ENCODE measurements at regions of chr5 and their contacts with region 1.

Region 1: DNA sequence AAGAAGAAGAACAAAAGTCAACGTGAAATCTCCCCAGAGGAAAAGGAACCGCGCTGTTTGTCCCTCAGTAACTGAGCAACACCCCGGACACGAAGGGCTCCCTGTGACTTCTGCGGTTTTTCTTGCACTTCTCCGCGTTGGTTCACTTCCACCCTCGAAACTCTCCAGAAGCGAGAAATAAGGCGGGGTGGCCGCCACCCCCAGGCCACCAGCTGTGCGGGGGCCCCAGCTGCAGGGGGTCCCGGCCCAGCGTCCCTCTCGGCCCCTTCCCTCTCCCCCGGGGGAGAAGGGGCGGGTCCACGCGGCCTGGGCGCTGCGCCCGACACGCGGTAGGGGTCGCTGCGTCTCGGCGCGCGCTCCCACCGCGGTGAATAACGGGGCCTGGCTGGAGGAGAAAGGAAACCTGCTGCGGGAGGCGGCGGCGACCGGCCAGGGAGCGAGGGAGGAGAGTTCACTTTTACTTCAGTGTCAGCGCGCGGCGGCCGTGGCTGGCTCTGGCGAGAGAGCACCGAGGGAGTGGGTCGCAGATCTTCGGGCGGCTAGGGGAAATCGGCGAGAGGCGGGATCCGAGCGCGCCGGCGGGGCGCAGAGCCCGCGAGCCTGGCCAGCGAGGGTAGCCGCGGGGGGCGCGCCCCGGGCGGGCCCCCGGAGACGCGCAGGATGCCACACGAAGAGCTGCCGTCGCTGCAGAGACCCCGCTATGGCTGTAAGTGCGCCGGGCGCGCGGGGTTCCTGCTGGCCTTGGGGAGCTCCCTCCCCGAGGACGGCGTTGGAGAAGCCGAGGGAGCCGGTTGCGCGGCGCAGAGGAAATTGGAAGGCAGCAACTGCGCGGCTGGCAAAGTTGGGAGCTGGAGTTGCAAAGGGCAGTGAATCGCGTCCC is at the start of gene IQGAP2:
- DNase-seq: peak; percentile 91 to 96 (median 94)
- H3K4me3 ChIP-seq: peak within 1 kb of the TSS; percentile 68 to 82
- H3K4me3 Mint-ChIP-seq: peak within 1 kb of the TSS; percentile 95 to 98 (median 97)
- H3K27ac ChIP-seq: peak within 1 kb of the TSS; percentile 93
- H3K27ac Mint-ChIP-seq: peak within 1 kb of the TSS; percentile 96 to 99 (median 98)
- H3K4me1 ChIP-seq: peaks cover 56% of the 10 kb centered on the region
- H3K4me1 Mint-ChIP-seq: peaks cover 45 to 72% (median 54%) of the 10 kb centered on the region in 4 donors
- H3K27me3 ChIP-seq: no peaks in the 10 kb centered on the region
- H3K27me3 Mint-ChIP-seq: no peaks in the 10 kb centered on the region
- total RNA-seq, gene IQGAP2: 125 to 126 TPM

Region 2: GRCh38 chr5:76199336-76200318 is 203.5 kb before region 1 on chr5:
- CTCF ChIA-PET with region 1: no interaction called
- POLR2A ChIA-PET with region 1: no interaction called
- intact Hi-C with region 1: no loop called
- DNase-seq: no peak
- H3K4me3 ChIP-seq: no peak overlapping the region
- H3K4me3 Mint-ChIP-seq: peak overlapping the region in 1 of 8 donors; percentile 66
- H3K27ac ChIP-seq: no peak overlapping the region
- H3K27ac Mint-ChIP-seq: peak overlapping the region in 1 of 7 donors; percentile 12
- H3K4me1 ChIP-seq: peaks cover 9% of the 10 kb centered on the region
- H3K4me1 Mint-ChIP-seq: peaks cover 0 to 9% (median 5%) of the 10 kb centered on the region in 4 donors
- H3K27me3 ChIP-seq: no peaks in the 10 kb centered on the region
- H3K27me3 Mint-ChIP-seq: peaks cover 0 to 9% of the 10 kb centered on the region in 2 donors

Region 3: DNA sequence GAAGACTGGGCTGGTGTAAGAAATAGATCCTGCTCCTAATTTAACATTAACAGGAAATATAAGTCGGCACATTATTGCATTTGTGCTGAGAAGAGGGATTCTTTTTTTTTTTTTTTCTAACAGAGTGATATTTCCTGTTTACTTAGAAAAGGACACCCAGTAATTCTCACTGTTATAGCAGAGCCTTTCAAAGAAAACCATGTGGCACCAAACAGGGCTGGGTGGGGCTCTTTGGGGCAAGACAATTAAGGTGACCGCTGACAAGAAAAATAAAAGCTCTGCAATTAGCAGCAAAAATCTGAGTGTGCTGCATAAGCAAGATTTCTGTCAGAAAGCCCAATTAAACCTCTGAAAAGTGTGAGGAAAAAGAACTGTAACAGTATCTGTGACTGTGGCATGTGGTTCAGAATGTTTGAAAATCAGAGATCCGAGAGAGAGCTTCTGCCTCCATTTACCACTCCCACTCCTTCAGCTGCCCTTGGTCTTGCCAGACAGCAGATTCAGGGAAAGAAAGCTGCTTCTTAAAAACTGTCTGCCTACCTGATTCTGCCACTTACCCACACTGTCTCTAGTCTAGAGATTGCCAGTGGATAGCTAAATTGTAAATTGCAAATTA is 77.1 kb before region 1 on chr5:
- CTCF ChIA-PET with region 1: interaction called, 31 read pairs
- POLR2A ChIA-PET with region 1: interaction called, 95 read pairs
- intact Hi-C with region 1: loop called (anchors 1 kb)
- DNase-seq: peak; percentile 52 to 65 (median 57)
- H3K4me3 ChIP-seq: no peak overlapping the region
- H3K4me3 Mint-ChIP-seq: peak overlapping the region; percentile 66 to 84 (median 74)
- H3K27ac ChIP-seq: peak overlapping the region; percentile 49
- H3K27ac Mint-ChIP-seq: peak overlapping the region; percentile 91 to 97 (median 94)
- H3K4me1 ChIP-seq: peaks cover 66% of the 10 kb centered on the region
- H3K4me1 Mint-ChIP-seq: peaks cover 52 to 79% (median 67%) of the 10 kb centered on the region in 4 donors
- H3K27me3 ChIP-seq: no peaks in the 10 kb centered on the region
- H3K27me3 Mint-ChIP-seq: no peaks in the 10 kb centered on the region

Region 4: DNA sequence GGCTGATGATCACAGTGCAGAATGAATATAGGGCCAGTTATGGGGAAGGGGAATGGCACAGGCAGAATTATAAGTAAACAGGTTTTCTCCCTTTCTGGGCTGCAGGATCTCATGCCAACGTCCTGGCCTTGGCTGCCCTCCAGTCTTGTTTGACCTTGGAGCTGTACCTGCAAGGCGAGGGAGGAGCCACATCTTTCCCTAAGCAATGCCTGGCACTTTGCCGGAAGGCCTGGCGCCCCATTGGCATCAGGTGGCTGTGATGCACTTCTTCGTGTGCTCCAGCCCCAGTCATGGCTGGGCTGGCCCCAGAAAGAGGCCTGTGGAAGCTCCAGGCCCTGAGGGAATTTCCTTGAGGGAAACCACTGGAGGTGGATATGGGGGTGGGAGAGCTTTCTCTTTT is 16.8 kb before region 1 on chr5:
- CTCF ChIA-PET with region 1: interaction called, 36 read pairs
- POLR2A ChIA-PET with region 1: interaction called, 102 read pairs
- intact Hi-C with region 1: no loop called
- DNase-seq: no peak
- H3K4me3 ChIP-seq: no peak overlapping the region
- H3K4me3 Mint-ChIP-seq: no peak overlapping the region
- H3K27ac ChIP-seq: no peak overlapping the region
- H3K27ac Mint-ChIP-seq: peak overlapping the region in 2 of 7 donors; percentile 8 to 57
- H3K4me1 ChIP-seq: peaks cover 54% of the 10 kb centered on the region
- H3K4me1 Mint-ChIP-seq: peaks cover 35 to 65% (median 45%) of the 10 kb centered on the region in 4 donors
- H3K27me3 ChIP-seq: no peaks in the 10 kb centered on the region
- H3K27me3 Mint-ChIP-seq: no peaks in the 10 kb centered on the region

Region 5: GRCh38 chr5:76473661-76474060 is 70.5 kb after region 1 on chr5:
- CTCF ChIA-PET with region 1: interaction called, 15 read pairs
- POLR2A ChIA-PET with region 1: interaction called, 87 read pairs
- intact Hi-C with region 1: loop called (anchors 1 kb)
- DNase-seq: peak; percentile 77 to 89 (median 81)
- H3K4me3 ChIP-seq: no peak overlapping the region
- H3K4me3 Mint-ChIP-seq: peak overlapping the region; percentile 42 to 76 (median 58)
- H3K27ac ChIP-seq: peak overlapping the region; percentile 23
- H3K27ac Mint-ChIP-seq: peak overlapping the region; percentile 90 to 99 (median 92)
- H3K4me1 ChIP-seq: peaks cover 90% of the 10 kb centered on the region
- H3K4me1 Mint-ChIP-seq: peaks cover 59 to 91% (median 77%) of the 10 kb centered on the region in 4 donors
- H3K27me3 ChIP-seq: no peaks in the 10 kb centered on the region
- H3K27me3 Mint-ChIP-seq: no peaks in the 10 kb centered on the region

Region 6: DNA sequence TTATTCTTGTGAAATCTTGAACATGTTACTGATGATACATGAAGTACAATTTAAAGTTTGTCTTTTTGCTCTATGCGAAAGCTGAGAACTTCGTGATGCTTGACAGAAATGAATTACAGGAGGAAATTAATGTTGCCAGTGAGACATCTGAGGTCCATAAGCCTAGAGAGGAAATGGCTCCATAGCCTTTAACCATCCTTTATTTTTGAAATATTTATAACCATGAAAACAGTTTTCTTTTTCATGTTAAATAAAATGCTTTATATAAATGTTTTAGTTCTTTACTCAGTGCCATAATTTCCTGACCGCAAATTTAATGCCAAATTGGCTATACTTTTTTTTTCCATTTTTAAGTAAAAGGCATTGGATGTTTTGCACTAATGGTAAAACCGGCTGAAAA is 191.0 kb after region 1 on chr5:
- CTCF ChIA-PET with region 1: no interaction called
- POLR2A ChIA-PET with region 1: no interaction called
- intact Hi-C with region 1: no loop called
- DNase-seq: no peak
- H3K4me3 ChIP-seq: no peak overlapping the region
- H3K4me3 Mint-ChIP-seq: no peak overlapping the region
- H3K27ac ChIP-seq: no peak overlapping the region
- H3K27ac Mint-ChIP-seq: peak overlapping the region in 2 of 7 donors; percentile 15 to 69
- H3K4me1 ChIP-seq: no peaks in the 10 kb centered on the region
- H3K4me1 Mint-ChIP-seq: peaks cover 0 to 7% (median 0%) of the 10 kb centered on the region in 4 donors
- H3K27me3 ChIP-seq: no peaks in the 10 kb centered on the region
- H3K27me3 Mint-ChIP-seq: no peaks in the 10 kb centered on the region

Region 7: DNA sequence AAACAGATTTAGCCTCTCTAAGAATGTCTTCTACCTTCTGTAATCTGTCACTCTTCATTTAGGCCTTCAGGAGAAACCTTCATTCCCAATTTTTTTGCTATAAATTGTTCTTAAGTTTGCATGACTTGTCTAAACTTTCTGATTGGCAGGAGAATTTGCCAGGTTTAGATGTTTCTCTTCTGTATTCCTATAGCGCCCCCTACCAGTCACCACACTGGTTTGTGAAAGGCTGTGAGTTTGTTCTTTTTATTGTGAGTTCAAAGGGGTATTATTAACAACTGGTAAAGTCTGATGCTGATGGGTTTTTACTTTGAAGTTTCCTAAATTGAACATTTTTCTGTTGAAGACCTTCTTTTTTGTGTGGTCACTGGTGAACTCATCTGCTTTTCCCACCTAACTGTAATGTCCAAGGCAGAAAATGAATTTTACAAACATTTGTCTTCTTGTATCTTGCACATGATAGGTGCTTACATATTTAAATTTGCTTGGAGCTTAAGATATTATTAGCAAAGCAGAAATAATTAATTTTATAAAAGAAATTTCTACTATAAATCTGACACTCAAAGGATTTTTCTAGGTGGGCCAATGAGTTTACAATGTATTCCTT is 238.5 kb after region 1 on chr5:
- CTCF ChIA-PET with region 1: interaction called, 4 read pairs
- POLR2A ChIA-PET with region 1: no interaction called
- intact Hi-C with region 1: loop called (anchors 5 kb)
- DNase-seq: peak; percentile 47 to 60 (median 56)
- H3K4me3 ChIP-seq: no peak overlapping the region
- H3K4me3 Mint-ChIP-seq: no peak overlapping the region
- H3K27ac ChIP-seq: no peak overlapping the region
- H3K27ac Mint-ChIP-seq: peak overlapping the region in 3 of 7 donors; percentile 9 to 61 (median 34)
- H3K4me1 ChIP-seq: no peaks in the 10 kb centered on the region
- H3K4me1 Mint-ChIP-seq: peaks cover 0 to 3% (median 1%) of the 10 kb centered on the region in 4 donors
- H3K27me3 ChIP-seq: no peaks in the 10 kb centered on the region
- H3K27me3 Mint-ChIP-seq: no peaks in the 10 kb centered on the region

Region 8: DNA sequence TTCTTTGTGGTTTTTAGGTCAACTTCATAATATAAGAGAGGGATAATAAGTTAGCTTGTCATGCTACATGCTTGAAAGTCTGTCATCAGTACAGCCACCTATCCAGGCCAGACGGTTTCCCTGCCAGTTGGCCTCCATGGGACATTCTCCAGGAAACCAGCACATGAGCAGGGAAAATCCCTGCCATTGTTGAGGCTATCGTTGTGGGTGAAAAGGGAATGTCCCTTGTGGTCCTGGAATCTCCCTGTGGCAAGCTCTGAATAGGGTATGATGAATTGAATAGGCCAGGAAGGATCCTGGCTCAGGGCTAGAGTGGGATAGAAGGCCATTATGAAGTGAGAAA is 428.0 kb after region 1 on chr5:
- CTCF ChIA-PET with region 1: no interaction called
- POLR2A ChIA-PET with region 1: no interaction called
- intact Hi-C with region 1: no loop called
- DNase-seq: no peak
- H3K4me3 ChIP-seq: no peak overlapping the region
- H3K4me3 Mint-ChIP-seq: no peak overlapping the region
- H3K27ac ChIP-seq: no peak overlapping the region
- H3K27ac Mint-ChIP-seq: no peak overlapping the region
- H3K4me1 ChIP-seq: no peaks in the 10 kb centered on the region
- H3K4me1 Mint-ChIP-seq: peaks cover 0 to 2% (median 2%) of the 10 kb centered on the region in 4 donors
- H3K27me3 ChIP-seq: no peaks in the 10 kb centered on the region
- H3K27me3 Mint-ChIP-seq: no peaks in the 10 kb centered on the region